CD8-positive, alpha-beta memory T cell (primary cell): ENCODE measurements at regions of chr9 and their contacts with region 1.

Region 1: GRCh38 chr9:112793213-112793810 is 42.8 kb downstream of the SNX30 start:
- DNase-seq: peak; percentile 68 to 87 (median 70)
- H3K4me3 ChIP-seq: no peak overlapping the region
- H3K4me3 Mint-ChIP-seq: no peak overlapping the region
- H3K27ac ChIP-seq: no peak overlapping the region
- H3K27ac Mint-ChIP-seq: peak overlapping the region in 2 of 8 donors; percentile 24 to 71
- H3K4me1 ChIP-seq: no peaks in the 10 kb centered on the region
- H3K4me1 Mint-ChIP-seq: peaks cover 18 to 39% (median 35%) of the 10 kb centered on the region in 3 donors
- H3K27me3 ChIP-seq: no peaks in the 10 kb centered on the region
- H3K27me3 Mint-ChIP-seq: peaks cover 0 to 2% of the 10 kb centered on the region in 2 donors

Region 2: GRCh38 chr9:112443200-112443599 is 350.1 kb before region 1 on chr9:
- CTCF ChIA-PET with region 1: interaction called, 12 read pairs
- POLR2A ChIA-PET with region 1: no interaction called
- DNase-seq: peak in 2 of 5 donors; percentile 16 to 24
- H3K4me3 ChIP-seq: no peak overlapping the region
- H3K4me3 Mint-ChIP-seq: no peak overlapping the region
- H3K27ac ChIP-seq: no peak overlapping the region
- H3K27ac Mint-ChIP-seq: no peak overlapping the region
- H3K4me1 ChIP-seq: no peaks in the 10 kb centered on the region
- H3K4me1 Mint-ChIP-seq: peaks cover 0 to 2% (median 0%) of the 10 kb centered on the region in 3 donors
- H3K27me3 ChIP-seq: no peaks in the 10 kb centered on the region
- H3K27me3 Mint-ChIP-seq: no peaks in the 10 kb centered on the region

Region 3: GRCh38 chr9:112717661-112718341 is 75.5 kb before region 1 on chr9 and contains the start of gene INIP:
- CTCF ChIA-PET with region 1: interaction called, 22 read pairs
- POLR2A ChIA-PET with region 1: no interaction called
- DNase-seq: peak; percentile 97 to 99 (median 98)
- H3K4me3 ChIP-seq: peak within 1 kb of the TSS; percentile 91
- H3K4me3 Mint-ChIP-seq: peak within 1 kb of the TSS; percentile 89 to 98 (median 95)
- H3K27ac ChIP-seq: peak within 1 kb of the TSS; percentile 99
- H3K27ac Mint-ChIP-seq: peak within 1 kb of the TSS; percentile 91 to 100 (median 98)
- H3K4me1 ChIP-seq: peaks cover 13% of the 10 kb centered on the region
- H3K4me1 Mint-ChIP-seq: peaks cover 23 to 40% (median 29%) of the 10 kb centered on the region in 3 donors
- H3K27me3 ChIP-seq: no peaks in the 10 kb centered on the region
- H3K27me3 Mint-ChIP-seq: no peaks in the 10 kb centered on the region
- total RNA-seq, gene INIP: 40.2 to 44.9 TPM

Region 4: GRCh38 chr9:112777914-112778313 is 15.4 kb before region 1 on chr9:
- CTCF ChIA-PET with region 1: interaction called, 10 read pairs
- POLR2A ChIA-PET with region 1: no interaction called
- DNase-seq: no peak
- H3K4me3 ChIP-seq: no peak overlapping the region
- H3K4me3 Mint-ChIP-seq: no peak overlapping the region
- H3K27ac ChIP-seq: no peak overlapping the region
- H3K27ac Mint-ChIP-seq: peak overlapping the region in 1 of 8 donors; percentile 7
- H3K4me1 ChIP-seq: no peaks in the 10 kb centered on the region
- H3K4me1 Mint-ChIP-seq: peaks cover 41 to 64% (median 60%) of the 10 kb centered on the region in 3 donors
- H3K27me3 ChIP-seq: no peaks in the 10 kb centered on the region
- H3K27me3 Mint-ChIP-seq: no peaks in the 10 kb centered on the region

Region 5: DNA sequence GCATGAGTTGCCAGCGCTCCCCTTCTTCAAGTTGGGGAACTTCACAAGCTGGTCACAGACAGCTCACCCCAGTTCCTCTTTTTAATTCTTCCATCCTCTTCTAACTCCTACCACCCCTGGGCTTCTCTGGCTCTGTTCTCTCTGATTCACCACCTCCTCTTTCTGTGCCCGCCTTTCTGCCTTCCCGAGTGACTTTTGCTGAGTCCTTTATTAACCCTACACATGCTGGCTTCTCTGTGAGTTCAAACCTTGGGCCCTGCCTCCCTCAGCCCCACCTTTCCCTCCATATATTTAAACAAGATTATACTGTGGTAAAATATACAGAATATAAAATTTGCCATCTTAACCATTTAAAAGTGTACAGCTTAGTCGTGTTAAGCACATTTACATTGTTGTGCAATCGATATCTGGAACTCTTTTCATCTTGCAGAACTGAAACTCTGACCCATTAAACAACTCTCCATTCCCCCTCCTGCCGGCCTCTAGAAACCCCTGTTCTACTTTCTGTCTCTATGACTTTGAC is 65.4 kb after region 1 on chr9:
- CTCF ChIA-PET with region 1: no interaction called
- POLR2A ChIA-PET with region 1: no interaction called
- DNase-seq: no peak
- H3K4me3 ChIP-seq: no peak overlapping the region
- H3K4me3 Mint-ChIP-seq: no peak overlapping the region
- H3K27ac ChIP-seq: no peak overlapping the region
- H3K27ac Mint-ChIP-seq: peak overlapping the region in 2 of 8 donors; percentile 19 to 38
- H3K4me1 ChIP-seq: no peaks in the 10 kb centered on the region
- H3K4me1 Mint-ChIP-seq: peaks cover 8 to 13% (median 11%) of the 10 kb centered on the region in 3 donors
- H3K27me3 ChIP-seq: no peaks in the 10 kb centered on the region
- H3K27me3 Mint-ChIP-seq: no peaks in the 10 kb centered on the region